ENCODE measurements at regions of chr2 and their contacts with region 1.

Region 1: GRCh38 chr2:54838585-54839035 is 115.1 kb downstream of the EML6 start:
- DNase-seq: peak; percentile 71 to 92 (median 77)
- H3K4me3 ChIP-seq: no peak overlapping the region
- H3K27ac ChIP-seq: peak overlapping the region in 1 of 5 donors; percentile 22
- H3K4me1 ChIP-seq: peaks cover 0 to 8% of the 10 kb centered on the region in 2 donors
- H3K27me3 ChIP-seq: no peaks in the 10 kb centered on the region
- CTCF ChIP-seq: peak; percentile 77 to 93 (median 86)
- POLR2A ChIP-seq: no peak

Region 2: GRCh38 chr2:54106631-54107454 is 731.8 kb before region 1 on chr2:
- intact Hi-C with region 1: loop called in 1 of 2 experiments (anchors 10 kb)
- DNase-seq: peak; percentile 46 to 79 (median 60)
- H3K4me3 ChIP-seq: no peak overlapping the region
- H3K27ac ChIP-seq: no peak overlapping the region
- H3K4me1 ChIP-seq: peaks cover 0 to 27% of the 10 kb centered on the region in 2 donors
- H3K27me3 ChIP-seq: no peaks in the 10 kb centered on the region
- CTCF ChIP-seq: peak; percentile 59 to 84 (median 74)
- POLR2A ChIP-seq: no peak

Region 3: DNA sequence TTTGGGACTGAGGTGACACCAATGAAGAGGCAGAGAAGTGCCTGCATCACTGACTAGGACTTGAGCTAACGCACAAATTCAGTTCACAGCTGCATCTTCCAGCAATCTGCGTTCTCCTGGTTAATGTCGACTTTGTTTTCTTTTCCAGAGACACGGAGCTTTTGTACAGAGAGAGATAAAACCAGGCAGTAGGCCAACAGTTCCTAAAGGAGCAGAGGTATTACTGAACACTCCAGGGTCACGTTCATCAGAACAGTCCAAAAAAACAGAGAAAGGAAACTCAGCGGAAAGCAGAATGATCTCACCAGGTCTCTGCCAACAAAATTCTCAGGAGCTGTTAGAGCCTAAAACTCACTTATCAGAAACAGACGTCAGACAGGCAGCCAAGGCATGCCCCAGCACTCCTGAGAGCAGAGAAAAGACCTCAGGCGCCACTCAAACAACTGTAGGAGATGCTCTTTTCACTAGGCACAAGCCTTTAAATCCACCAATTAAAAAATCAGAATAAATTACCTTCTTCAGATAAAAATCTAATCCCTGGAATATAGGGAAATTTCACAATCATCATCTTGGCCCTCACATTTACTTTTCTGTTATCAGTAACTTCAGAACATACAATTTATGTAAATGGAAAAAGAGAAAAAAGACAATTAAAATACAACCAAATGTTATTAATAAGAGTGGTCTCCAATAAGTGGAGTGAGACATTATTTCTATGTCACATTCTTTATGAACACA is 478.4 kb before region 1 on chr2:
- intact Hi-C with region 1: no loop called
- DNase-seq: peak; percentile 44 to 87 (median 76)
- H3K4me3 ChIP-seq: peak overlapping the region in 1 of 4 donors; percentile 25
- H3K27ac ChIP-seq: peak overlapping the region; percentile 41 to 81 (median 77)
- H3K4me1 ChIP-seq: peaks cover 0 to 20% of the 10 kb centered on the region in 2 donors
- H3K27me3 ChIP-seq: no peaks in the 10 kb centered on the region
- CTCF ChIP-seq: no peak
- POLR2A ChIP-seq: peak in 1 of 2 donors; percentile 39

Region 4: GRCh38 chr2:54471221-54471711 is 367.3 kb before region 1 on chr2:
- intact Hi-C with region 1: no loop called
- DNase-seq: peak; percentile 74 to 92 (median 84)
- H3K4me3 ChIP-seq: no peak overlapping the region
- H3K27ac ChIP-seq: peak overlapping the region in 4 of 5 donors; percentile 1 to 82 (median 41)
- H3K4me1 ChIP-seq: peaks cover 24 to 60% of the 10 kb centered on the region in 2 donors
- H3K27me3 ChIP-seq: no peaks in the 10 kb centered on the region
- CTCF ChIP-seq: no peak
- POLR2A ChIP-seq: no peak

Region 5: DNA sequence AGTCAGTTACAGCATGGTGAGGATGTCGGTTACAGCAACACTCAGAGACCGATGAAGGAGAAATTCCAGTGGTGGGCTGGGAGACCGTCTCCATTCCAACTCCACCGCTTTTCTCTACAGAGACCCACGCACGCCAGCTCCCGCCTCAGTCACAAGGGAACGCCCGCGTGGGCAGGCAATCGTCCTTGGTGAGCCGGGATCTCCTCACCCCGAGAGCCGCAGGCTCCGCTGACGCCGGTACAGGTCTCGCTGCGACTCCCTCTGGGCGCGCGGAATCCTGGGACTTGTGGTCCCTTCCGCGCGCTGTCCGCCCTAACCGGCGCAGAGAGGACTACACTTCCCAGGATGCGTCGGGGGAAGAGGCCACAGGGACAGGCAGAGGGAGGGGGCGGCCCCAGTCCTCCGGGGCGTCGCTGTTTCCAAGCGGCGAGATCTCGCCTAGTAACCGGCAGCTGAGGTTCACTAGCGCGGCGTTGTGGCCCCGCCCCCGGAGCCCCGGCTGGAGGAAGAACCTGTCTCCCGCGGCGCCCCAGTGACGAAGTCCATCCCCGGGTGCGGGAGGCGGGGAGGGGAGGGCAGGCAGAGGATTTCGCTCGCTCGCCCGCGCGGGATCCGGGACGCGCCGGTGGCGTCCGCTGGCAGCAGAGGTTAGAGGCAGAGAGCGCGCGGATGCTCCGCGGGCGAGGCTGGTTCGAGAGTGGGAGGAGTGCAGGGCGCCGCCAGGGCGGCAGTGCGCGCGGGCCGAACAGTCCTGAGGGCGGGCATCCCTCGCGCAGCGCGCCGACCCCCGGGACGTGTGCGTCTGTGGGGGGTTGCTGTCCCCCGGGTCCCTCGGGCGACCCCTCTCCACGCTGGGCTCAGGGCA is 115.2 kb before region 1 on chr2 and contains the start of gene EML6:
- intact Hi-C with region 1: loop called (anchors 5 to 10 kb)
- DNase-seq: peak; percentile 99 to 100 (median 99)
- H3K4me3 ChIP-seq: peak within 1 kb of the TSS; percentile 16 to 87 (median 60)
- H3K27ac ChIP-seq: peak within 1 kb of the TSS; percentile 75 to 97 (median 88)
- H3K4me1 ChIP-seq: peaks cover 6 to 8% of the 10 kb centered on the region in 2 donors
- H3K27me3 ChIP-seq: no peaks in the 10 kb centered on the region
- CTCF ChIP-seq: peak in 5 of 6 experiments; percentile 11 to 41 (median 31)
- POLR2A ChIP-seq: peak; percentile 63 to 94
- total RNA-seq, gene EML6: 6.5 to 19.3 (median 11.6) TPM

Measured in adrenal gland (tissue), 19 donors.